ENCODE measurements at regions of chr2 and their contacts with region 1.

Region 1: GRCh38 chr2:43226558-43226954 is at the start of gene ZFP36L2:
- DNase-seq: peak; percentile 96 to 97
- ATAC-seq: peak; percentile 58 to 78
- H3K4me3 ChIP-seq: peak within 1 kb of the TSS; percentile 86
- H3K27ac ChIP-seq: peak within 1 kb of the TSS; percentile 89 to 98
- H3K4me1 ChIP-seq: peaks cover 40% of the 10 kb centered on the region
- CTCF ChIP-seq: no peak
- EP300 ChIP-seq: no peak
- POLR2A ChIP-seq: peak; percentile 84
- RAD21 ChIP-seq: no peak; a peak in 1 of 5 replicates
- polyA plus RNA-seq, gene ZFP36L2: 10.5 and 14.9 TPM in 2 replicates

Region 2: GRCh38 chr2:42414158-42414557 is 812.4 kb before region 1 on chr2:
- CTCF ChIA-PET with region 1: no interaction called
- POLR2A ChIA-PET with region 1: no interaction called
- DNase-seq: no peak
- ATAC-seq: no peak
- H3K4me3 ChIP-seq: no peak overlapping the region
- H3K27ac ChIP-seq: no peak overlapping the region
- H3K4me1 ChIP-seq: no peaks in the 10 kb centered on the region
- CTCF ChIP-seq: no peak
- EP300 ChIP-seq: no peak
- POLR2A ChIP-seq: no peak
- RAD21 ChIP-seq: no peak

Region 3: GRCh38 chr2:42844901-42845821 is 381.4 kb before region 1 on chr2:
- CTCF ChIA-PET with region 1: interaction called, 12 read pairs
- POLR2A ChIA-PET with region 1: interaction called, 5 read pairs
- DNase-seq: no peak
- ATAC-seq: no peak
- H3K4me3 ChIP-seq: no peak overlapping the region
- H3K27ac ChIP-seq: no peak overlapping the region
- H3K4me1 ChIP-seq: no peaks in the 10 kb centered on the region
- CTCF ChIP-seq: no peak
- EP300 ChIP-seq: no peak
- POLR2A ChIP-seq: no peak
- RAD21 ChIP-seq: no peak

Region 4: GRCh38 chr2:42957109-42957860 is 269.3 kb before region 1 on chr2:
- CTCF ChIA-PET with region 1: interaction called, 54 read pairs
- POLR2A ChIA-PET with region 1: interaction called, 6 read pairs
- DNase-seq: no peak
- ATAC-seq: peak; percentile 16 to 23; a peak in 2 of 6 replicates
- H3K4me3 ChIP-seq: no peak overlapping the region
- H3K27ac ChIP-seq: 0 out of 6 replicates have a peak overlapping the region, but pooled peaks of 1 of the 2 experiments have one; percentile 20
- H3K4me1 ChIP-seq: no peaks in the 10 kb centered on the region
- CTCF ChIP-seq: no peak
- EP300 ChIP-seq: no peak
- POLR2A ChIP-seq: no peak
- RAD21 ChIP-seq: no peak

Region 5: DNA sequence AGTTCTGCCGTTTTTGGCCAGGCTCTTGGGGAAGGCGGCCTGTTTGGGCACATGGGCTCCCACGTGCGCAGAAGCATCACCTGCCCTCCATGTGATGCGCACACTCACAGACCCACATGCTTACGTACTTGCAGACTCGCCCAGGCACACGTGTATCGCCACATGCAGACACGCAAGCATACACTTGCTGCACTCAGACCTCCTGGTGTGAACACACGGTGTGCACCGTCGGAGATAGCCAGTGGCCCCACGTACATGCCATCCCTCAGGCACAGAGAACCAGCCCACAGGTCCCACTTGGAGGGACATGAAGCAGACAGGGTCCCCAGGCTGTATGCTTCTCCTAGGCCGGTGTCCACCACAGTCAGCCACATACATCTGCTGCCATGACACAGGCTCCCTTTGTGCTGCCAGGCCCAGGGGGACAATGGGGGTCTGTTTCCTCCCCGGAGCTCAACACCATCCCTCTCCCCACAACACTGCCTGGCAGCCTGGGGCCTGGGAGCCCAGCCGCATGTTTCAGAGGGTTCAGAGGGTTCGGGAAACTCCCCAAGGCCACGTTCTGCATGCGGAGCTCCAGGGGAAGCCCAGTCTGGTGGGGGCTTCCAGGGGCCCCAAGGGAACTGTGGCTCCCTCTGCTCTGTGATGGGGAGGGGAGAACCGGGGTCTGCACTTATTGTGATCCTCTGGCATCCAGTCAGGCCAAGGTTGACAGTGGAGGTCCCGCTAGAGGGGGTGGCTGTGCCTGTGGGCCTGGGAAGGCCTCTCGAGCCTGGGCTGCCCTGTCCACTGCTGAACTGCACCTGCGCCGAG is 226.1 kb before region 1 on chr2:
- CTCF ChIA-PET with region 1: interaction called, 11 read pairs
- POLR2A ChIA-PET with region 1: no interaction called
- DNase-seq: no peak
- ATAC-seq: peak; percentile 15 to 30; a peak in 2 of 6 replicates
- H3K4me3 ChIP-seq: no peak overlapping the region
- H3K27ac ChIP-seq: peak overlapping the region in 1 of 2 experiments; percentile 60; a peak in 3 of 6 replicates
- H3K4me1 ChIP-seq: peaks cover 18% of the 10 kb centered on the region
- CTCF ChIP-seq: no peak
- EP300 ChIP-seq: no peak
- POLR2A ChIP-seq: no peak
- RAD21 ChIP-seq: no peak

Region 6: DNA sequence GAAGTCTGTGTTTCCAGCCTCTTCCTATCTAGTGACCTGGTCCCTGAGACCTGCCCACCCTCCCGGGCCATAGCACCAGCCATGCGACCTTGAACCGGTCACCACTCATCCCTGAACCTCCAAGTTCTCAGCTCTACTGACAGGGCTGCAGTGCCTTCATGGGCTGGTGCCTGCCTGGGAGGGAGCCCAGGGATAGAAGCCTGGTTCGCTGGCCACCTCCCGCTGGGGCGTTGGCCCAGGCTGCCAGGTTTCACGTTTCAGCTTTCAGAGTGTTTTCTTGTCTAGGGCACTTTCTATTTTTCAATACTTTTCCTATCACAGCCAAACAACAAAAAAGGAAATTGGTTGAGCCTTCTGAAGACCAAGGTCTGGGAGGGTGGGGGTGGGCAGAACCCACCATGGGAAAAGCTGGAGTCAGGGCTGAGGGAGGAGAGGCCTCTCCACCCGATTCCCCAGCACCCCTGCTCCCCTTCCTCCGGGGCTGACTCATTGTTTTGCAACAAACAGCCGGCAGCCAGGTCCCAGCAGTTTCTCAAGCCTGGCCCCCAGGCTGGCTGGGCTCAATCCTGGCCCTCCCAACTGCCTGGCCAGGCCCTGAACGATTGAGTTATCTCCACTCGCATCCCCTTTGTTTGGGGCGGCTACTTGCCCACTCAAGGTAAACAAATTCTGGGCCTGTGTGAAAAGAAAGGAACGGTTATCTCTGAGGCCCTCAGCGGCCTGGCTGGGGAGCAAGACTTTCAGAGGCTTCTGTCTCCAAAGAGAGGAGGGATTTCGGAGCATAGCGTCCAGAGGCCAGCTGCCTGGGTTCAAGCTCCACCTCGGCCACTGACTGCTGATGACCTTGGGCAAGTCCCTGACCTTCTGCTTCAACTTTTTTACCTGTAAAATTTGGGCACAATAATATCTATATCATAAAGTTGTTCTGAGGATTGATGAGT is 47.7 kb before region 1 on chr2:
- CTCF ChIA-PET with region 1: interaction called, 17 read pairs
- POLR2A ChIA-PET with region 1: interaction called, 19 read pairs
- DNase-seq: peak; percentile 89 to 90
- ATAC-seq: peak; percentile 88 to 91
- H3K4me3 ChIP-seq: no peak overlapping the region
- H3K27ac ChIP-seq: peak overlapping the region; percentile 81 to 93
- H3K4me1 ChIP-seq: peaks cover 64% of the 10 kb centered on the region
- CTCF ChIP-seq: no peak
- EP300 ChIP-seq: no peak
- POLR2A ChIP-seq: no peak; the same call in 1 of the 2 replicates
- RAD21 ChIP-seq: peak; percentile 21 to 49; a peak in 3 of 5 replicates

Region 7: DNA sequence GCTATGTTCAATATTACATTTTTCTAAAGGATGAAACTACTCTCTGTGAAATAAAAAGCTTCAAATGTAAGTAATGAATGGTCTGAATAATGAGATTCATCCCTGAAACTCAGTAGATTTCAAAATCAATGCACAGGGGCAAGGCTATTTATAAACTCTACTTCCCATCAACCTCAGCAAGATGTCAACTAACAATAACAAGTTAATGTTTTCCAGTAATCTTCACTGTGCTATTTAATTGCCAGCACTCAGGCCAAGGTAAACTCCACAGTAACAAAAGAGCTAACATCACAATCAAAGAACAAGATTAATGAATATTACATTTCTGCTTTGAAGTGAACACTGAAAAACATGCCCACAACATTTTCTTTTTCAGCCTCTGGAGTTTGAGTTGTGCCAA is 144.1 kb after region 1 on chr2:
- CTCF ChIA-PET with region 1: no interaction called
- POLR2A ChIA-PET with region 1: no interaction called
- DNase-seq: no peak
- ATAC-seq: no peak
- H3K4me3 ChIP-seq: no peak overlapping the region
- H3K27ac ChIP-seq: no peak overlapping the region
- H3K4me1 ChIP-seq: peaks cover 9% of the 10 kb centered on the region; the same call in 2 of the 3 replicates
- CTCF ChIP-seq: no peak
- EP300 ChIP-seq: no peak
- POLR2A ChIP-seq: no peak
- RAD21 ChIP-seq: no peak

Region 8: GRCh38 chr2:43478411-43479086 is 252.0 kb after region 1 on chr2:
- CTCF ChIA-PET with region 1: interaction called, 74 read pairs
- POLR2A ChIA-PET with region 1: interaction called, 11 read pairs
- DNase-seq: peak in 1 of 2 experiments; percentile 63
- ATAC-seq: peak in 1 of 2 experiments; percentile 66; a peak in 2 of 6 replicates
- H3K4me3 ChIP-seq: no peak overlapping the region
- H3K27ac ChIP-seq: peak overlapping the region in 1 of 2 experiments; percentile 52; a peak in 3 of 6 replicates
- H3K4me1 ChIP-seq: peaks cover 38% of the 10 kb centered on the region
- CTCF ChIP-seq: no peak
- EP300 ChIP-seq: peak; percentile 12 to 65; a peak in 1 of 5 replicates
- POLR2A ChIP-seq: no peak
- RAD21 ChIP-seq: peak in 1 of 2 experiments; percentile 47; a peak in 3 of 5 replicates

Measured in A549 (cell line).